ENCODE measurements at regions of chr18 and their contacts with region 1.

Region 1: GRCh38 chr18:36129300-36130038 is at the starts of genes ELP2 and SLC39A6:
- DNase-seq: peak; percentile 97
- ATAC-seq: peak; percentile 85
- H3K4me3 ChIP-seq: peak within 1 kb of the TSS; percentile 82 to 98 (median 90)
- H3K4me3 Mint-ChIP-seq: peak within 1 kb of the TSS; percentile 94
- H3K27ac ChIP-seq: peak within 1 kb of the TSS; percentile 97 to 99
- H3K27ac Mint-ChIP-seq: peak within 1 kb of the TSS; percentile 98
- H3K4me1 ChIP-seq: peaks cover 34 to 36% of the 10 kb centered on the region in 2 donors
- H3K4me1 Mint-ChIP-seq: peaks cover 53% of the 10 kb centered on the region
- H3K27me3 ChIP-seq: no peaks in the 10 kb centered on the region
- H3K27me3 Mint-ChIP-seq: no peaks in the 10 kb centered on the region
- CTCF ChIP-seq: no peak
- total RNA-seq, gene ELP2: 137 and 169 TPM in 2 replicates
- total RNA-seq, gene SLC39A6: 18.2 and 19.5 TPM in 2 replicates

Region 2: DNA sequence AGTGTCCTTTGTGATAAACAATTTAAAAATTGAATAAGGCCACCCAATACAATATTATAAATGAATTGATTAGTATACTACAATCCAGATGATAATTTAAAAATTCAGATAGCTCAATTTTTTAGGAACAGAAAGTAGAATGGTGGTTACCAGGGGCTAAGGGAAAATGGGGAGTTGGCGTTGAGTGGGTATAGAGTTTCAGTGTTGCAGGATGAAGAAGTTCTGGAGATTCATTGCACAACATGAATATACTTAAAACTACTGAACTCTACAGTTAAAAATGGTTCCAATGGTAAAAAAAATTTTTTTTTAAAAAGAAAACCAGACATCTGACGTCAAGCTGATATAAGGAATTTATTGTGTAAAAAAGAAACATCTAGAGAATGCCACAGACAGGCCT is 21.3 kb before region 1 on chr18:
- CTCF ChIA-PET with region 1: no interaction called
- POLR2A ChIA-PET with region 1: no interaction called
- intact Hi-C with region 1: no loop called
- DNase-seq: no peak
- ATAC-seq: no peak
- H3K4me3 ChIP-seq: no peak overlapping the region
- H3K4me3 Mint-ChIP-seq: no peak overlapping the region
- H3K27ac ChIP-seq: no peak overlapping the region
- H3K27ac Mint-ChIP-seq: no peak overlapping the region
- H3K4me1 ChIP-seq: no peaks in the 10 kb centered on the region
- H3K4me1 Mint-ChIP-seq: no peaks in the 10 kb centered on the region
- H3K27me3 ChIP-seq: no peaks in the 10 kb centered on the region
- H3K27me3 Mint-ChIP-seq: no peaks in the 10 kb centered on the region
- CTCF ChIP-seq: no peak

Region 3: GRCh38 chr18:36149514-36150289 is 20.2 kb after region 1 on chr18:
- CTCF ChIA-PET with region 1: interaction called, 4 read pairs
- POLR2A ChIA-PET with region 1: interaction called, 4 read pairs
- intact Hi-C with region 1: loop called (anchors 1 kb)
- DNase-seq: peak; percentile 71
- ATAC-seq: peak; percentile 96
- H3K4me3 ChIP-seq: peak overlapping the region in 2 of 5 experiments; percentile 11 to 16
- H3K4me3 Mint-ChIP-seq: peak overlapping the region; percentile 76
- H3K27ac ChIP-seq: peak overlapping the region; percentile 66 to 76
- H3K27ac Mint-ChIP-seq: peak overlapping the region; percentile 90
- H3K4me1 ChIP-seq: peaks cover 32 to 40% of the 10 kb centered on the region in 2 donors
- H3K4me1 Mint-ChIP-seq: peaks cover 42% of the 10 kb centered on the region
- H3K27me3 ChIP-seq: no peaks in the 10 kb centered on the region
- H3K27me3 Mint-ChIP-seq: no peaks in the 10 kb centered on the region
- CTCF ChIP-seq: no peak

Region 4: GRCh38 chr18:36828630-36829361 is 699.3 kb after region 1 on chr18 and contains the starts of genes KIAA1328 and TPGS2:
- CTCF ChIA-PET with region 1: no interaction called
- POLR2A ChIA-PET with region 1: no interaction called
- intact Hi-C with region 1: loop called (anchors 1 kb)
- DNase-seq: peak; percentile 93
- ATAC-seq: peak; percentile 88
- H3K4me3 ChIP-seq: peak within 1 kb of the TSS; percentile 69 to 99 (median 79)
- H3K4me3 Mint-ChIP-seq: peak within 1 kb of the TSS; percentile 87
- H3K27ac ChIP-seq: peak within 1 kb of the TSS; percentile 77 to 81
- H3K27ac Mint-ChIP-seq: peak within 1 kb of the TSS; percentile 87
- H3K4me1 ChIP-seq: peaks cover 19 to 22% of the 10 kb centered on the region in 2 donors
- H3K4me1 Mint-ChIP-seq: peaks cover 37% of the 10 kb centered on the region
- H3K27me3 ChIP-seq: no peaks in the 10 kb centered on the region
- H3K27me3 Mint-ChIP-seq: no peaks in the 10 kb centered on the region
- CTCF ChIP-seq: peak; percentile 57
- total RNA-seq, gene KIAA1328: 22.1 and 24.3 TPM in 2 replicates
- total RNA-seq, gene TPGS2: 50.9 and 53.7 TPM in 2 replicates

Measured in B cell (primary cell).